Psoas muscle (tissue), 8 donors: ENCODE measurements at regions of chr9 and their contacts with region 1.

Region 1: GRCh38 chr9:34048923-34049697 is 423 bp upstream of the UBAP2 start:
- DNase-seq: peak; percentile 97 to 99
- ATAC-seq: peak; percentile 92 to 95 (median 93)
- H3K4me3 ChIP-seq: peak overlapping the region; percentile 94
- H3K27ac ChIP-seq: peak overlapping the region; percentile 98
- H3K4me1 ChIP-seq: peaks cover 22% of the 10 kb centered on the region
- H3K27me3 ChIP-seq: no peaks in the 10 kb centered on the region
- CTCF ChIP-seq: no peak

Region 2: DNA sequence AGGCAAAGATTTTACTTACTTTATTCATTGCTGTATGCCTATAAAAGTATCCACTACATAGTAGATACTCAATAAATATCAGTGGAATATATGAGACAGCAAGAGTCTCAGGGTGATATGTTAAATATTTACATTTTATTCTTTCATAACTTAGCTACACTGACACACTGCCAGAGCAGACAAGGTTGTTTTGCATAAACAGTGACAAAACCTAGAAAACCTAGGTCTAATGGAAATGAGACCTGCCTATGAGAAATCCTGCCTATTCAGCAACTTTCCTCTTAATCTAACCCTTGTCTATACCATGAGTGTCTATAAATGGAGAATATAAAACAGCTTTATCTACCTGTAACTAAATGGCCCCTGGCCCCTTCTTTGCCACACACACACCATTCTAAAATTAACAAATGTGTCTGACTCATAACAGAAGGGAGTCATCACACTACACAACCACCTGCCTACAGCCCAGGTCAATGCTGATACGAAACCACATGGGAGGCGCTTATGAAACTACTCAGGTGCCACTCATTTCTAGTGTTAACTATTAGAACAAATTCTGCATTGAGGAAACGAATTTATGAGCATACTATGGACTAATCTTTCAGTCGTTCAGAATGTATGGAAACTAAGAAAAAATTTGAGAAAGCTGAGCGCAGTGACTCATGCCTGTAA is 60.8 kb before region 1 on chr9:
- intact Hi-C with region 1: loop called in 1 of 2 experiments (anchors 10 kb)
- DNase-seq: no peak
- ATAC-seq: peak; percentile 54 to 76 (median 70)
- H3K4me3 ChIP-seq: no peak overlapping the region
- H3K27ac ChIP-seq: no peak overlapping the region
- H3K4me1 ChIP-seq: no peaks in the 10 kb centered on the region
- H3K27me3 ChIP-seq: no peaks in the 10 kb centered on the region
- CTCF ChIP-seq: no peak

Region 3: GRCh38 chr9:34032631-34033030 is 16.5 kb before region 1 on chr9:
- intact Hi-C with region 1: loop called in 1 of 2 experiments (anchors 1 kb)
- DNase-seq: no peak
- ATAC-seq: no peak
- H3K4me3 ChIP-seq: no peak overlapping the region
- H3K27ac ChIP-seq: no peak overlapping the region
- H3K4me1 ChIP-seq: peaks cover 14% of the 10 kb centered on the region
- H3K27me3 ChIP-seq: no peaks in the 10 kb centered on the region
- CTCF ChIP-seq: no peak

Region 4: DNA sequence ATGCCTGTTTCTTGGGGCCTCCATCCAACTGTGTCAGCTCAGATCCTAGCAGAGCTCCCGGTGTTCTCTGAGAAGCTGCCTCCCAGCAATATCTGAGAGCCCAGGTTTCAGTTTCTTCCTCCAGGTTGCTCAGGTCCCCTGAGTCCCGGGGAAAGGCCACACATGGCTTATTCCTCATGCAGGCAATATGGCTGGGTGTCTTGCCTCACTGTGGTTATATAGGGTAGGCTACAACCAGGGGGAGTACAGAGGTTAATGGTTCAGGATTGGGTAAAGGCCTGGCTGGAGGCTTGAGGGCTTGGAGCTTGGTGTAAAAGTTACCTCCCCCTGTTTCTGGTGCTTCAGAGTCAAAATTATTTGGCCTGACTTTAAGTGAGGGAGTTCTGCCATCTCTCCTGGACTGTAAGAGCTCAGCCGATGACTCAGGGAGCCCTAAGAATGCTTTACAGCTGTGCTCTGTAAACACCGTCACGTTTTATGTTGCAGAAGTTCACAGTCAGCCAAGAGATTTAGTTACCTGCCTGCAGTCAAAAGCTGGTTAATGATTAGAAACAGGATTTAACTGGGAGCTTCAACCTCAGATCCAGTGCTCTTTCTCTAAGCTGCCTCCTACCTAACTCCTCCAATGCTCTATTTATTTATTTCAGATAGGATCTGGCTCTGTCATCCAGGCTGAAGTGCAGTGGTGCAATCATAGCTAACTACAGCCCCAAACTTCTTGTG is 23.9 kb after region 1 on chr9:
- intact Hi-C with region 1: loop called in 1 of 2 experiments (anchors 2 kb)
- DNase-seq: no peak
- ATAC-seq: peak; percentile 90 to 94 (median 94)
- H3K4me3 ChIP-seq: no peak overlapping the region
- H3K27ac ChIP-seq: peak overlapping the region; percentile 86
- H3K4me1 ChIP-seq: peaks cover 30% of the 10 kb centered on the region
- H3K27me3 ChIP-seq: no peaks in the 10 kb centered on the region
- CTCF ChIP-seq: no peak

Region 5: GRCh38 chr9:34085581-34086500 is 36.7 kb after region 1 on chr9:
- intact Hi-C with region 1: loop called in 1 of 2 experiments (anchors 5 kb)
- DNase-seq: peak in 1 of 2 donors; percentile 17
- ATAC-seq: peak; percentile 59 to 75 (median 72)
- H3K4me3 ChIP-seq: no peak overlapping the region
- H3K27ac ChIP-seq: peak overlapping the region; percentile 83
- H3K4me1 ChIP-seq: peaks cover 31% of the 10 kb centered on the region
- H3K27me3 ChIP-seq: no peaks in the 10 kb centered on the region
- CTCF ChIP-seq: no peak